A549 (cell line): ENCODE measurements at regions of chr16 and their contacts with region 1.

Region 1: DNA sequence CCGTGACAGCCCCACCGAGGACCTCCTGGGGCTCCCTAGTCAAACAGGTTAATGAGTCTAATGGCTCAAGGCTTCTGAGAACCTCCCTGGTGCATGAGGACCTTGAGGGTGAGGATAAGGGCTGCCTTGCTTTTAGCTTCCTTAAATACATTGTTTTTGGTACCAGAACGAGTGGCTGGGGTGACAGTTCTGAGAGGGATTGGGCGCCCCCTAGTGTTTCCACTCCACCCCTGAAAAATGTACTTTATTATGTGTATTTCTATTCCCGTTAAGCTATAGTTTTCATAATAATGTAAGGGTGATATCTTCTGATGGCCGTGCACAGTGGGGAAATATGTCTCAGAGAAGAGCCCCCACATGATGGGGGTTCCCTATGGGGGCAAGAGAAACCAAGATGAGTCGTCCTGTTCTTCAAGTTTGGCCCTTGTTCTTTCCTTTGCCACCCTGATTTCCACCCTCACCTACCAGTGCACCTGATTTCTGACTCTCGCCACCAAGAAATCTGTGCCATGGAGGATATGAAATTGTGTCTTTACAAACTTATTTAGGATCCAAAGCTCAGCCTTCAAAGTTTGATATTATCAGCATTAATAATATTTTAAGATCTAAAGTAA is 14.5 kb upstream of the VWA3A start:
- DNase-seq: peak; percentile 50 to 61
- ATAC-seq: peak; percentile 86 to 90
- H3K4me3 ChIP-seq: no peak overlapping the region
- H3K27ac ChIP-seq: no peak overlapping the region
- H3K4me1 ChIP-seq: no peaks in the 10 kb centered on the region
- CTCF ChIP-seq: peak; percentile 95
- EP300 ChIP-seq: no peak
- POLR2A ChIP-seq: no peak
- RAD21 ChIP-seq: peak; percentile 85 to 90

Region 2: DNA sequence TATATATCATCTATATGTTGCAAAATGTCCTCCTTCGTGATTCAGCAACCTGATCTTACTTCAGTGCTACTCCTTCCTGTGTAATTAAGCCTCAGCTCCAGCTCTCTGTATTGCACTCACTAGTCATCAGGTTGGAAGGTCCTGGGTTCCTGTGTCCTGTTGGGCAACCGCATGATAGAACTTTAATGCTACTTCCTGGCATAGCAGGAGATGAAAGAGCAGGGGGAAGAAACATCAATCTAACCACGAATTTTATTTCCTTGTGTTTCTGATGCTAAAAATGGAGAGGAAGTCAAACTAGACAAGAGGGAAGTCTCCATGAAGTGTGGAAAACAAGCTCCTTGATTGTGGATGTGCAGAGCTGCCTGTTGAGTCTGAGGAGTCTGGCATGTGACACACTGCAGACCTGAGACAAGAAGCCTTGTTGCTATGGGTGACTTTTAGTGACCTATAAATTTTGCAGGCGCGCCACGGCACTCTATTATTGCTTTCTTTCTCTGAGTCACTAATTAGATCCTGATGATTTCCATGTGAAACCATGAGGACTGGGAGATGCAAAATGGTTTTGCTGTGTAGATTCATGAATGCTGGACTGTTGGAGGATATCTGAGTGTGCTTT is 451.0 kb before region 1 on chr16:
- CTCF ChIA-PET with region 1: no interaction called
- POLR2A ChIA-PET with region 1: no interaction called
- DNase-seq: peak in 1 of 2 experiments; percentile 46
- ATAC-seq: peak; percentile 70 to 74; a peak in 5 of 6 replicates
- H3K4me3 ChIP-seq: no peak overlapping the region
- H3K27ac ChIP-seq: peak overlapping the region in 1 of 2 experiments; percentile 25; a peak in 4 of 6 replicates
- H3K4me1 ChIP-seq: peaks cover 22% of the 10 kb centered on the region
- CTCF ChIP-seq: no peak
- EP300 ChIP-seq: no peak
- POLR2A ChIP-seq: no peak
- RAD21 ChIP-seq: no peak

Region 3: GRCh38 chr16:21952040-21952792 is 125.6 kb before region 1 on chr16:
- CTCF ChIA-PET with region 1: interaction called, 13 read pairs
- POLR2A ChIA-PET with region 1: interaction called, 3 read pairs
- DNase-seq: peak; percentile 66 to 78
- ATAC-seq: peak; percentile 71 to 74
- H3K4me3 ChIP-seq: peak overlapping the region; percentile 66
- H3K27ac ChIP-seq: peak overlapping the region; percentile 93 to 95
- H3K4me1 ChIP-seq: peaks cover 22% of the 10 kb centered on the region
- CTCF ChIP-seq: no peak
- EP300 ChIP-seq: no peak
- POLR2A ChIP-seq: no peak
- RAD21 ChIP-seq: no peak

Region 4: GRCh38 chr16:22007509-22008214 is 70.1 kb before region 1 on chr16 and contains the start of gene MOSMO:
- CTCF ChIA-PET with region 1: interaction called, 226 read pairs
- POLR2A ChIA-PET with region 1: interaction called, 17 read pairs
- DNase-seq: peak; percentile 46 to 60
- ATAC-seq: peak; percentile 90 to 91
- H3K4me3 ChIP-seq: peak within 1 kb of the TSS; percentile 90
- H3K27ac ChIP-seq: peak within 1 kb of the TSS; percentile 91 to 93
- H3K4me1 ChIP-seq: peaks cover 13% of the 10 kb centered on the region; the same call in 2 of the 3 replicates
- CTCF ChIP-seq: no peak
- EP300 ChIP-seq: no peak
- POLR2A ChIP-seq: peak; percentile 52
- RAD21 ChIP-seq: no peak
- polyA plus RNA-seq, gene MOSMO: 14.4 and 14.7 TPM in 2 replicates

Region 5: GRCh38 chr16:22035153-22035552 is 42.7 kb before region 1 on chr16:
- CTCF ChIA-PET with region 1: interaction called, 22 read pairs
- POLR2A ChIA-PET with region 1: no interaction called
- DNase-seq: no peak
- ATAC-seq: no peak
- H3K4me3 ChIP-seq: no peak overlapping the region
- H3K27ac ChIP-seq: no peak overlapping the region
- H3K4me1 ChIP-seq: peaks cover 7% of the 10 kb centered on the region; the same call in 1 of the 3 replicates
- CTCF ChIP-seq: no peak
- EP300 ChIP-seq: no peak
- POLR2A ChIP-seq: no peak
- RAD21 ChIP-seq: no peak

Region 6: GRCh38 chr16:22091758-22092600 is 14.2 kb after region 1 on chr16 and contains the start of gene VWA3A:
- CTCF ChIA-PET with region 1: interaction called, 46 read pairs
- POLR2A ChIA-PET with region 1: no interaction called
- DNase-seq: no peak
- ATAC-seq: peak in 1 of 2 experiments; percentile 29; a peak in 3 of 6 replicates
- H3K4me3 ChIP-seq: no peak within 1 kb of the TSS
- H3K27ac ChIP-seq: no peak within 1 kb of the TSS
- H3K4me1 ChIP-seq: no peaks in the 10 kb centered on the region
- CTCF ChIP-seq: no peak
- EP300 ChIP-seq: no peak
- POLR2A ChIP-seq: no peak
- RAD21 ChIP-seq: no peak
- polyA plus RNA-seq, gene VWA3A: 0.17 TPM in 1 of 2 replicates, not detected in the other

Region 7: GRCh38 chr16:22141746-22142145 is 63.9 kb after region 1 on chr16:
- CTCF ChIA-PET with region 1: interaction called, 12 read pairs
- POLR2A ChIA-PET with region 1: no interaction called
- DNase-seq: peak; percentile 54 to 55
- ATAC-seq: peak; percentile 81 to 92
- H3K4me3 ChIP-seq: no peak overlapping the region
- H3K27ac ChIP-seq: no peak overlapping the region
- H3K4me1 ChIP-seq: no peaks in the 10 kb centered on the region
- CTCF ChIP-seq: peak; percentile 35; the same call in 2 of the 3 replicates
- EP300 ChIP-seq: no peak
- POLR2A ChIP-seq: no peak
- RAD21 ChIP-seq: 0 out of 5 replicates have a peak, but pooled peaks of 1 of the 2 experiments have one; percentile 11

Region 8: DNA sequence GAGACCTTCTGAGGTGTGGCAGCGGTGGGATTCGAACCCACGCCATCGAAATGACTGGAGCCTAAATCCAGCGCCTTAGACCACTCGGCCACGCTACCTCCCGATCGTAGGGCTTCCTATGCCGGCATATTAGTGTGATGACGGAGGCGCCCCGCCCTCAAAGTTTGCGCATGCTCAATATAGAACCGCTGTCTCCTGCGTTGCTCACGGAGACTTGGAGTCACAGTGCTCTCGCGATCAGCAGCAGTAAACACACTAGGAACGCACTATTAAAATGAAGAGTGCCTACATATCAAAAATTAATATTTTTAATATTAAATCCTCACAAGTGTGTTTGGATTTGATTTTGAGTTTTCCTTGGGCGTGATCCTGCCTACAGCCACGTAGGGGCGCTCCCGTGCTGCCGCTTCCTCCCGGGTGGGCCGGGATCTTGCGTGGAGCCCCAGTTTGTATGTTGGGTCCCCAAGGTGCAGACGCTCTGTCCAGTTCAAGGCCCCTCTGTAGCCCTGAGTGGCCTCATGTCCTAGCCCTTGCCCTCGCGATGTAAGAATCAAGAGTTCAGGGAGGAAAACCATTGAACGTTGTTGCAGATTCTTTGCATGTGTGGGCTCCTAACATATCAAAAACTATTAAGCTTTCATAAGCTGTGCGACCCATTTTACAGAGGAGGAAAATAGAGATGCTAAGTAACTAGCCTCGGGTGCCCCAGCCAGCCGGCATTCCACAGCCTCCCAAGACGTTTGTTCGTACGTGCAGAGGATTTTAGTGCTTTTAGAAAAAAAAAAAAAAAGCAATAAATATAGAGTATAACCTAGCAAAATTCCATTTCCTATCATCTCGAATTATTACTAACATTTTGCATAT is 118.1 kb after region 1 on chr16:
- CTCF ChIA-PET with region 1: no interaction called
- POLR2A ChIA-PET with region 1: no interaction called
- DNase-seq: peak; percentile 60 to 90
- ATAC-seq: peak; percentile 40 to 55
- H3K4me3 ChIP-seq: peak overlapping the region; percentile 55
- H3K27ac ChIP-seq: peak overlapping the region; percentile 70 to 85
- H3K4me1 ChIP-seq: peaks cover 22% of the 10 kb centered on the region
- CTCF ChIP-seq: peak; percentile 94
- EP300 ChIP-seq: no peak
- POLR2A ChIP-seq: 0 out of 2 replicates have a peak, but pooled peaks have one; percentile 13
- RAD21 ChIP-seq: peak; percentile 86 to 88

Region 9: GRCh38 chr16:22284637-22285036 is 206.8 kb after region 1 on chr16:
- CTCF ChIA-PET with region 1: no interaction called
- POLR2A ChIA-PET with region 1: no interaction called
- DNase-seq: no peak
- ATAC-seq: no peak
- H3K4me3 ChIP-seq: no peak overlapping the region
- H3K27ac ChIP-seq: no peak overlapping the region
- H3K4me1 ChIP-seq: no peaks in the 10 kb centered on the region
- CTCF ChIP-seq: no peak
- EP300 ChIP-seq: no peak
- POLR2A ChIP-seq: no peak
- RAD21 ChIP-seq: no peak